Activated CD4-positive, alpha-beta T cell treated with anti-CD3 and anti-CD28 coated beads for 36 hours (primary cell): ENCODE measurements at regions of chr12 and their contacts with region 1.

Region 1: DNA sequence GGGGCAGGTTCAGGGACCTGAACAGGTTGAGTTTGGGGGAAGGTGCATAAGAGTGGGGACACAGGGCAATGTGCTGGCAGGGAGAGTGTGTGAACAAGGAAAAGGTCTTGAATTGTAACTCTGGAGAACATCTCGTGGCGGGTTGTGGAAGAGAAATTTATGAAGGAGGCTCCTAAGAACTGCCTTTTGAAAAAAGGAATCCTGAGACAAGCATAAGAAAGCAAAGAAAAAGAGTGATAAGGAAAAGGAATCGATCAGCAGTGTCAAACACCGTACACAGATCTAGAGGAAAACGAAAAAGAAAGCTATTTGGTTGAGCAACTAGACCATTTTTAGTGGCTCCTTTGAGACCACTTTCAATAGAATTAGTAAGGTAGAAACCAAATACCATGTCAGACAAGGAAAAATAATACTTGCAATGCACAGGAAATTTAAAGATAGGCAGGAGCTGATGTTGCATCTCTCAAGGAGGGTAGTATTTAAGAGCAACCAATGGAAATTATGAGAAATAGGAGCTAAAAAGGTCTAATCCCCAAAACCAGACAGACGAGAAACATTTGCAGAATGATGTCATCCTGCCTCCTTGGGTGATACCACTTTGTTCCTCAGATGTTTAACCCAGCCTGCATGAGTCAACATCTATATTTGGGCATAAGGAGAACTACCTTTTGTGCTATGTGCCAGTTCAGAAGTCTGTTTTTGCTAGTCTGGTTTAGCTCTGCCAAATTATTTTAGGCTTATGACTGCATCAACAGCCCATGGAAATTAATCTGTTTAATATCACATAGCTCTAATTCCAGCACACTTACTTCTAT is 64.5 kb upstream of the STK38L start:
- DNase-seq: peak; percentile 58
- ATAC-seq: peak; percentile 95
- H3K4me3 Mint-ChIP-seq: peak overlapping the region; percentile 7
- H3K27ac Mint-ChIP-seq: peak overlapping the region; percentile 90
- H3K4me1 Mint-ChIP-seq: peaks cover 41% of the 10 kb centered on the region
- H3K27me3 Mint-ChIP-seq: no peaks in the 10 kb centered on the region

Region 2: DNA sequence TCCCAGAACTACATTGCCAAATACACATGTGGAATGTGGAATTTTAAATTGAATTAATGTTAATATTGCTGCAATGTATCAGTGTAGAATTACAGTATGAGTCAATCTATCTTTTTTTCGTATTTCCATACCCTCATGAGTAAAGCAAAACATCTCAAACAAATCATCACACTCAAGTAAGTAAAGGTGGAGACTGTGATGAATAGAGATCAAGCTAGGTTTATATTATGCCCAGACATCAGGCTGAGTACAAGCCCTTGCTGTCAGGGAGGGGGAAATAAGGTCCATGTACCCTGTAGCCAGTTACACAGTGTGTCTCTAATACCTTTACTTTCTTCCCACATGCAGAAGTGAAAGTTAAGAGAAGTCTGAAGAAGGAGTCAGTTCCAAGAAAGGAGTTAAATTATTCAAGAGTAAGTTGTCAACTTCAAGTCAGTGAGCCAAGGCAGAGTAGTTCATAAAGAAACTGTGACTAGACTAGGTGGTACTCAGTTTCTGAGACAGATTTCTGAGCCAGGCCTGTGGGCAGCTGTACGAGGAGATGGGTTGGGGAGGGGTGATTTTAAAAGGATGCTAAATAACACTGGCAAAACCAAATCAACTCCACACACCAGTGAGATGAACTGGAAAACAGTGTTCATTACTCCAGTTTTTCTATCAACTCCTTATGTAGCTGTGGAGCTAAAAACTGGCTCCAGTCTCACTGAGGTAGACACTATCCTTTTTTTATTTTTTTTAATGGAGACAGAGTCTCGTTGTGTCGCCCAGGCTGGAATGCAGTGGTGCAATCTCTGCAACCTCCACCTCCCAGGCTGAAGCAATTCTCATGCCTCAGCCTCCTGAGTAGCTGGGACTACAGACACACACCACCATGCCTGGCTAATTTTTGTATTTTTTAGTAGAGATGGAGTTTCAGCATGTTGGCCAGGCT is 40.7 kb after region 1 on chr12:
- CTCF ChIA-PET with region 1: no interaction called
- POLR2A ChIA-PET with region 1: no interaction called
- intact Hi-C with region 1: loop called (anchors 5 kb)
- DNase-seq: peak; percentile 46
- ATAC-seq: peak; percentile 93
- H3K4me3 Mint-ChIP-seq: no peak overlapping the region
- H3K27ac Mint-ChIP-seq: peak overlapping the region; percentile 84
- H3K4me1 Mint-ChIP-seq: peaks cover 20% of the 10 kb centered on the region
- H3K27me3 Mint-ChIP-seq: peaks cover 4% of the 10 kb centered on the region

Region 3: GRCh38 chr12:27293463-27293862 is 113.9 kb after region 1 on chr12:
- CTCF ChIA-PET with region 1: no interaction called
- POLR2A ChIA-PET with region 1: no interaction called
- intact Hi-C with region 1: loop called in 1 of 2 experiments (anchors 1 kb)
- DNase-seq: no peak
- ATAC-seq: no peak
- H3K4me3 Mint-ChIP-seq: no peak overlapping the region
- H3K27ac Mint-ChIP-seq: no peak overlapping the region
- H3K4me1 Mint-ChIP-seq: peaks cover 8% of the 10 kb centered on the region
- H3K27me3 Mint-ChIP-seq: no peaks in the 10 kb centered on the region